Activated T-helper 1 cell treated with anti-CD3 and anti-CD28 coated beads, Interleukin-12 subunit alpha, Interleukin-12 subunit beta, Interleukin-2, Interleukin-4 antibody, amounts not matched to agents 30 ng/mL and 10 ng/mL and 1 ng/mL, durations not matched to agents 14 hours and 24 hours and 36 hours (primary cell): ENCODE measurements at regions of chr19 and their contacts with region 1.

Region 1: GRCh38 chr19:7943444-7944176 is at the start of gene TIMM44:
- DNase-seq: peak; percentile 99
- H3K4me3 Mint-ChIP-seq: peak within 1 kb of the TSS; percentile 87
- H3K27ac Mint-ChIP-seq: peak within 1 kb of the TSS; percentile 98
- H3K4me1 Mint-ChIP-seq: peaks cover 27% of the 10 kb centered on the region
- H3K27me3 Mint-ChIP-seq: no peaks in the 10 kb centered on the region
- total RNA-seq, gene TIMM44: 114 and 120 TPM in 2 replicates

Region 2: GRCh38 chr19:7841751-7842660 is 101.6 kb before region 1 on chr19:
- intact Hi-C with region 1: no loop called
- DNase-seq: no peak
- H3K4me3 Mint-ChIP-seq: no peak overlapping the region
- H3K27ac Mint-ChIP-seq: no peak overlapping the region
- H3K4me1 Mint-ChIP-seq: no peaks in the 10 kb centered on the region
- H3K27me3 Mint-ChIP-seq: no peaks in the 10 kb centered on the region

Region 3: GRCh38 chr19:7903244-7904073 is 40.2 kb before region 1 on chr19 and contains the start of gene MAP2K7:
- intact Hi-C with region 1: loop called (anchors 1 kb)
- DNase-seq: peak; percentile 100
- H3K4me3 Mint-ChIP-seq: peak within 1 kb of the TSS; percentile 90
- H3K27ac Mint-ChIP-seq: peak within 1 kb of the TSS; percentile 94
- H3K4me1 Mint-ChIP-seq: peaks cover 29% of the 10 kb centered on the region
- H3K27me3 Mint-ChIP-seq: peaks cover 2% of the 10 kb centered on the region
- total RNA-seq, gene MAP2K7: 47.6 and 51.9 TPM in 2 replicates

Region 4: DNA sequence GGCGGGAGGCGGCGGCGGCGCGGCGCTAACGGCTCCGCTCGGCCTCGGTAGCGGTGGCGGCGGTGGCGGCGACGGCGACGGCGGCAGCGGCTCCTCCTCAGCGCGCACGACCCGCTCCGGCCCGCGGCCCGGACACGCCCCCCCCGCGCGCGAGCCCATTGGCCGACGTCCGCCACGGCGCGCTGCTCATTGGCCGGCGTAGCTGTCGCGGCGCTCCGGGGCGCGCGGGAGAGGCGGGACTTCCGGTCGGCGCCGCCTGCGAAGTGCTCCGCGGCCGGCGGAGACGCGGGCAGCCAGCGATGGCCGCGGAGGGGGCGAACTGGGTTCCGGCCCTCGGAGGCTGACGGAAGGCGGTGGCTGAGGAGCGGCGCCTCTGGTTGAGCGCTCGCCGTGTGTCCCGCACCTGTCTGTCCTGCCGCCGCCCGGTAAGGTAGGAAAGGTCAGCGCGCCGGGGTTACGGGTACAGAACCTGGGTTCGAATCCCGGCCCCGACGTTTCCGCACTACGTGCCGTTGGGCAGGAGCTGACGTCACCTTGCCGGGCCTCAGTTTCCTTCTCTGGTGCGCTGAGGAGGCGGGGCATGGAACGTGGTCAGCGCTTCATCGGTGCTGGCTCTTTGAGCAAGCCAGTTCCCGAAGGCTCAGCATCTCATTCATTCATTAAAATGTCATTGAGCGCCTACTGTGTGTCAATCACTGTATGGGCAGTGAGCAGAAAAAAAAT is 62.1 kb after region 1 on chr19 and contains the start of gene ELAVL1:
- intact Hi-C with region 1: loop called (anchors 1 kb)
- DNase-seq: peak; percentile 91
- H3K4me3 Mint-ChIP-seq: peak within 1 kb of the TSS; percentile 99
- H3K27ac Mint-ChIP-seq: peak within 1 kb of the TSS; percentile 94
- H3K4me1 Mint-ChIP-seq: peaks cover 34% of the 10 kb centered on the region
- H3K27me3 Mint-ChIP-seq: no peaks in the 10 kb centered on the region
- total RNA-seq, gene ELAVL1: 182 and 186 TPM in 2 replicates

Region 5: GRCh38 chr19:8158411-8159074 is 214.9 kb after region 1 on chr19:
- intact Hi-C with region 1: loop called (anchors 2 kb)
- DNase-seq: peak; percentile 43
- H3K4me3 Mint-ChIP-seq: no peak overlapping the region
- H3K27ac Mint-ChIP-seq: no peak overlapping the region
- H3K4me1 Mint-ChIP-seq: peaks cover 15% of the 10 kb centered on the region
- H3K27me3 Mint-ChIP-seq: peaks cover 19% of the 10 kb centered on the region

Region 6: GRCh38 chr19:8321060-8321985 is 377.7 kb after region 1 on chr19 and contains the starts of genes NDUFA7 and RPS28:
- intact Hi-C with region 1: loop called (anchors 1 kb)
- DNase-seq: peak; percentile 96
- H3K4me3 Mint-ChIP-seq: peak within 1 kb of the TSS; percentile 100
- H3K27ac Mint-ChIP-seq: peak within 1 kb of the TSS; percentile 99
- H3K4me1 Mint-ChIP-seq: peaks cover 31% of the 10 kb centered on the region
- H3K27me3 Mint-ChIP-seq: no peaks in the 10 kb centered on the region
- total RNA-seq, gene NDUFA7: 51.1 and 51.8 TPM in 2 replicates
- total RNA-seq, gene RPS28: 1,836 and 1,872 TPM in 2 replicates